ENCODE measurements at regions of chr18 and their contacts with region 1.

Region 1: DNA sequence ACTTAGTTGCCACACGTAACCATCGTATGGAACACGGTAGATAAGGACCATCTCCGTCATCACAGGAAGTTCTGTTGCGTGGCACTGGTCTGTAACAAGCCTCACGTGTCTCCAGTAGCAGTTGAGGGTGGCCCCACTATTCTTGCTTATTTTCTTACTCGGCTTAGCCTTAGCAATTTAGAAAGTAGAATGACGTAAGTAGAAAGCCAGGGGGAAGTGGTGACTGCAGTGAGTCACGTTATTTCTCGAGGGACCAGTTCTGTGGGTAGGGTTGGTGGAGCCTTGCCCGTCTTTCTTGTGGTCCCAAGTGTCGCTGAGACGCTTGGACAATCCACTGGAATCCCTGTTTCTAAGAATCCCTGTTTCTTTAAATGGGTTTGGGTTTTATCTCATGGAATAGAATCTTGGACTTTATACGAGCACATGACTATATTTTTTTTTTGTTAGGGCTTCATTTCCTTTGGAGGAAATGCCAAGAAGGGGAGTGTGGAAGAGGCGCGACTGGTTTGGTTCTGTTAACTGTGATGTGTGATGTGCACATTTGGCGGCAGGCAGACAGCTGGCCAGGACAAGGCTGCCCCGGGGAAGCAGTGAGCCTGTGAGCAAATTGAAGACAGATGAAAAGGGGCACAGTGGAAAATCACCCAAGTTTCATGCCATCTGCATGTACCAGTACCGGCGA is 96.2 kb downstream of the CABLES1 start:
- DNase-seq: peak; percentile 97 to 100 (median 99)
- H3K4me3 ChIP-seq: peak overlapping the region in 1 of 3 experiments; percentile 17
- H3K4me3 Mint-ChIP-seq: peak overlapping the region; percentile 61 to 81
- H3K27ac ChIP-seq: peak overlapping the region; percentile 72 to 77
- H3K27ac Mint-ChIP-seq: peak overlapping the region; percentile 94 to 98 (median 97)
- H3K4me1 ChIP-seq: peaks cover 22 to 32% of the 10 kb centered on the region in 2 donors
- H3K4me1 Mint-ChIP-seq: peaks cover 52% of the 10 kb centered on the region
- H3K27me3 ChIP-seq: no peaks in the 10 kb centered on the region
- H3K27me3 Mint-ChIP-seq: peaks cover 0 to 7% (median 6%) of the 10 kb centered on the region in 3 donors
- CTCF ChIP-seq: no peak

Region 2: GRCh38 chr18:22813648-22814328 is 417.7 kb before region 1 on chr18:
- intact Hi-C with region 1: no loop called
- DNase-seq: no peak
- H3K4me3 ChIP-seq: no peak overlapping the region
- H3K4me3 Mint-ChIP-seq: no peak overlapping the region
- H3K27ac ChIP-seq: no peak overlapping the region
- H3K27ac Mint-ChIP-seq: no peak overlapping the region
- H3K4me1 ChIP-seq: no peaks in the 10 kb centered on the region
- H3K4me1 Mint-ChIP-seq: no peaks in the 10 kb centered on the region
- H3K27me3 ChIP-seq: peaks cover 0 to 4% of the 10 kb centered on the region in 2 donors
- H3K27me3 Mint-ChIP-seq: peaks cover 0 to 7% (median 6%) of the 10 kb centered on the region in 3 donors
- CTCF ChIP-seq: peak; percentile 14

Region 3: GRCh38 chr18:23077493-23078256 is 153.8 kb before region 1 on chr18:
- intact Hi-C with region 1: loop called in 1 of 2 experiments (anchors 5 kb)
- DNase-seq: peak; percentile 37 to 68 (median 64)
- H3K4me3 ChIP-seq: peak overlapping the region in 1 of 3 experiments; percentile 54
- H3K4me3 Mint-ChIP-seq: peak overlapping the region in 1 of 2 donors; percentile 64
- H3K27ac ChIP-seq: peak overlapping the region; percentile 69 to 84
- H3K27ac Mint-ChIP-seq: peak overlapping the region; percentile 88 to 97 (median 95)
- H3K4me1 ChIP-seq: peaks cover 33 to 40% of the 10 kb centered on the region in 2 donors
- H3K4me1 Mint-ChIP-seq: peaks cover 36% of the 10 kb centered on the region
- H3K27me3 ChIP-seq: no peaks in the 10 kb centered on the region
- H3K27me3 Mint-ChIP-seq: peaks cover 1 to 12% (median 2%) of the 10 kb centered on the region in 3 donors
- CTCF ChIP-seq: no peak

Region 4: DNA sequence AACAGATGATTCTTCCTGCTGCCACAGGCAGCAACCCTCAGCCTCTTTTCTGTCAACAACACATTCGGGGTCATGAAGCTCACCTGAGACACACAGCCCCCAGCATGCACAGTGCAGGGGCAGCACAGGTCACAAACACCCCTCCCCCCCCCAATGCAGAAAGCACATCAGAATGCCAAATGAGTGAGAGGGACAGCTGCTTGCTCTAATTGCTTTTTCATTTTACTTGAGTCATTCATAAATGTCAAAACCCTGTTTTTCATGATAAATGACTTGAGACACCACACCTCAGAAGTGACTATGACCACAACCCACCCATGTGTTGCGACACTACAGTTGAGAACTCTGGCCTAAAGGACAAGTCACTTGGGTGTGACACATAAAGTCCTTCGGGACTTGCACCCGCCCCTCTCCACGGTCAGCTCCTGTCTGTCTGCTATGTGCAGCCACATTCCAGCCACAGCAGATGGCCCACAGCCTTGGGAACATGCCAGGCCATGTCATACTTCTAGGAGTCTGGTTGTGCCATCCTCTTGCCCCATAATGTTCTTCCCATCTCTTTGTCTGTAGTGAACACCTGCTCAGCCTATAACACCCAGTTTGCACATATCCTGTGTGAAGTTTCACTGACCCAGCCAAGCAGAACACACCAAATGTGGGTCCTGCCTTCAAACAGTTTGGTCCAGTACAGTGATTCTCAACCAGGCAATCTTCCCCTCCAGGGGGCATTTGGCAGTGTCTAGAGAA is 191.4 kb after region 1 on chr18:
- intact Hi-C with region 1: loop called in 1 of 2 experiments (anchors 10 kb)
- DNase-seq: peak; percentile 94 to 98 (median 97)
- H3K4me3 ChIP-seq: peak overlapping the region in 1 of 3 experiments; percentile 7
- H3K4me3 Mint-ChIP-seq: peak overlapping the region; percentile 13 to 72
- H3K27ac ChIP-seq: peak overlapping the region; percentile 34 to 76
- H3K27ac Mint-ChIP-seq: peak overlapping the region; percentile 93 to 99 (median 96)
- H3K4me1 ChIP-seq: peaks cover 23 to 24% of the 10 kb centered on the region in 2 donors
- H3K4me1 Mint-ChIP-seq: peaks cover 28% of the 10 kb centered on the region
- H3K27me3 ChIP-seq: no peaks in the 10 kb centered on the region
- H3K27me3 Mint-ChIP-seq: no peaks in the 10 kb centered on the region
- CTCF ChIP-seq: no peak

Measured in CD14-positive monocyte (primary cell).